B cell (primary cell): ENCODE measurements at regions of chr5 and their contacts with region 1.

Region 1: GRCh38 chr5:122835681-122836080 is 9.7 kb upstream of the SNX24 start:
- DNase-seq: no peak
- ATAC-seq: peak; percentile 33
- H3K4me3 ChIP-seq: no peak overlapping the region
- H3K4me3 Mint-ChIP-seq: no peak overlapping the region
- H3K27ac ChIP-seq: peak overlapping the region in 1 of 2 donors; percentile 44
- H3K27ac Mint-ChIP-seq: no peak overlapping the region
- H3K4me1 ChIP-seq: peaks cover 1 to 5% of the 10 kb centered on the region in 2 donors
- H3K4me1 Mint-ChIP-seq: peaks cover 11% of the 10 kb centered on the region
- H3K27me3 ChIP-seq: no peaks in the 10 kb centered on the region
- H3K27me3 Mint-ChIP-seq: no peaks in the 10 kb centered on the region
- CTCF ChIP-seq: no peak

Region 2: GRCh38 chr5:122790354-122791103 is 45.2 kb before region 1 on chr5:
- CTCF ChIA-PET with region 1: no interaction called
- POLR2A ChIA-PET with region 1: no interaction called
- intact Hi-C with region 1: loop called (anchors 5 kb)
- DNase-seq: no peak
- ATAC-seq: no peak
- H3K4me3 ChIP-seq: no peak overlapping the region
- H3K4me3 Mint-ChIP-seq: peak overlapping the region; percentile 21
- H3K27ac ChIP-seq: peak overlapping the region in 1 of 2 donors; percentile 14
- H3K27ac Mint-ChIP-seq: peak overlapping the region; percentile 42
- H3K4me1 ChIP-seq: peaks cover 21 to 44% of the 10 kb centered on the region in 2 donors
- H3K4me1 Mint-ChIP-seq: peaks cover 62% of the 10 kb centered on the region
- H3K27me3 ChIP-seq: no peaks in the 10 kb centered on the region
- H3K27me3 Mint-ChIP-seq: no peaks in the 10 kb centered on the region
- CTCF ChIP-seq: no peak

Region 3: GRCh38 chr5:122937914-122938313 is 102.2 kb after region 1 on chr5:
- CTCF ChIA-PET with region 1: no interaction called
- POLR2A ChIA-PET with region 1: no interaction called
- intact Hi-C with region 1: no loop called
- DNase-seq: no peak
- ATAC-seq: no peak
- H3K4me3 ChIP-seq: no peak overlapping the region
- H3K4me3 Mint-ChIP-seq: no peak overlapping the region
- H3K27ac ChIP-seq: no peak overlapping the region
- H3K27ac Mint-ChIP-seq: no peak overlapping the region
- H3K4me1 ChIP-seq: no peaks in the 10 kb centered on the region
- H3K4me1 Mint-ChIP-seq: no peaks in the 10 kb centered on the region
- H3K27me3 ChIP-seq: no peaks in the 10 kb centered on the region
- H3K27me3 Mint-ChIP-seq: no peaks in the 10 kb centered on the region
- CTCF ChIP-seq: no peak

Region 4: DNA sequence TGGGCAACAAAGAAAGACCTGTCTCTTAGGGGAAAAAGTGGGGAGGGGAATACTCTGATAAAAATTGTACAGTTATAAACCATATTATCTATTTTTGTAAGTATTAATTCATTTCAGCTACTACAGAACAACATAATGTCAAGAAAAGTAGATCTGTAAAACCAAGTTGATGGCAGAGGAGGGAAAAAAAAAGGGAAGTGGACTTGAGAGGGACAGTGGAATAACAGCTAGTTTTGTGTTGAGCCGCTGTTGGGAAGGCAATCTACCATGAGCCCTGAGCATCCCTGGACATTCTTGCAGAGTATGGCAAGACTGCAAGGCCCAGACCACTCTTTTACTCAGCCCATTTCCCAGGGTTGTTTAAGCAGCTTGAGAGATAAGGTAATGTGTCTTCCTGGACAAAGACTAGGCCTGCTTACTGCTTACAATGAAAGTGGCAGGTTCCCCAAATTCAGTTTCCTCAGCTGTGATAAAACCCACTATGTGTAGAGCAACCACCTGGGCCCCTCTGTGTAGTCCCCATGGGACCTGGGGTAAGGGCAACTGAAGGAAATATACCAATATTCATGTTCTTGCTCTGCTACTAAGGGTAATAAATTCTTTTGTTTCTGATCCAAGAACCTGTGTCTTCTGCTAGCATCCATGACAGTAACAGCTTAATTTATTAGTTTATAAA is 562.5 kb after region 1 on chr5:
- CTCF ChIA-PET with region 1: no interaction called
- POLR2A ChIA-PET with region 1: no interaction called
- intact Hi-C with region 1: loop called (anchors 10 kb)
- DNase-seq: peak; percentile 84
- ATAC-seq: peak; percentile 99
- H3K4me3 ChIP-seq: no peak overlapping the region
- H3K4me3 Mint-ChIP-seq: peak overlapping the region; percentile 16
- H3K27ac ChIP-seq: peak overlapping the region; percentile 73
- H3K27ac Mint-ChIP-seq: peak overlapping the region; percentile 91
- H3K4me1 ChIP-seq: peaks cover 18 to 27% of the 10 kb centered on the region in 2 donors
- H3K4me1 Mint-ChIP-seq: peaks cover 30% of the 10 kb centered on the region
- H3K27me3 ChIP-seq: no peaks in the 10 kb centered on the region
- H3K27me3 Mint-ChIP-seq: no peaks in the 10 kb centered on the region
- CTCF ChIP-seq: no peak